ENCODE measurements at regions of chr2 and their contacts with region 1.

Region 1: DNA sequence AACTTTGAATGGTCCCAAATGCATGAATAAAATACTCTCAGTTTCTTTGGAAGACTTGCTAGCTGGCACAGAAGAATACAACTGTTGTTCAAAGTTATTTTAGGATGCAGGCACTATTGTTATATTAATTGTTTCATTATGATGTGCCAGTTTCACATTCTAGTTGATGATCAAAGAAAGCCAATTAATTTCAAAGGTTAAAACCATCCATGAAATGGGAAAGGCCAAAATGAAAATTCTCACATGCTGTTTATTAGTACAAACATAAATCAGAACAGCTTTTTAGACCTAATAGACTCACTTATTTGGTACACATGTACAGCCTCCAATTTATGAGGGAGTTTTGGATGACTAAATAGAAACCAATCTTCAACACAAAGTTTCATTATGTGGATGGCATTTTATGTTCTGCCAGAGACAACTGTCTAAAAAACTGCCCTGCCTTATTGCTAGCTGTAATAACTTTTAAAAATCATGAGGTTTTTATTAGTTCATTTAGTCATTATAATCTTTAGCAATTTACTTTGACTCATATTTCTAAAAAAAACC is 42.2 kb downstream of the RFTN2 start:
- DNase-seq: no peak
- H3K4me3 ChIP-seq: no peak overlapping the region
- H3K27ac ChIP-seq: no peak overlapping the region
- H3K4me1 ChIP-seq: no peaks in the 10 kb centered on the region
- H3K27me3 ChIP-seq: no peaks in the 10 kb centered on the region
- CTCF ChIP-seq: no peak
- EP300 ChIP-seq: no peak
- POLR2A ChIP-seq: no peak

Region 2: DNA sequence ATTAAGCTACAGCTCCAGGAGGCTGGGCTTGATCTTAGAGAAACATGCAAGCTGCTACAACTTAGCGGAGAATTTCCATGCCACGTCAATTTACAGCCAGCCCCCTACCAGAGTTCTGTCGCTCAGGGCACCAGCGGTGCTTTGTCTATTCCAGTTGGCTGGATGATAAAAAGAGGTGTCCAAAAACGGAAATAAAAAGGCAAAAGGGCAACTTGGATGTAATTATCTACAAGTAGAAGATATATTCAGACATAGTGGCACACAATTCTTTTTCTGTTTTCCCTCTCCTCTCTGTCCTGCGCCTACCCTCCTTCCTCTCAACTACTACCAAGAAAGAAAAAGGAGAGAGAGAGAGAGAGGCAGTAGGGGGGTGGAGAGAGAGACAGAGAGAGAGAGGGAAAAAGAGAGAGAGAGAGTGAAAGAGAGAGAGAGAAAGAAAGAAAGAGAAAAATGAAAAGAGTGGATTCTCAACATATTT is 42.6 kb after region 1 on chr2:
- intact Hi-C with region 1: loop called (anchors 5 kb)
- DNase-seq: no peak
- H3K4me3 ChIP-seq: peak overlapping the region; percentile 21 to 40 (median 30)
- H3K27ac ChIP-seq: peak overlapping the region; percentile 49 to 63 (median 57)
- H3K4me1 ChIP-seq: no peaks in the 10 kb centered on the region
- H3K27me3 ChIP-seq: no peaks in the 10 kb centered on the region
- CTCF ChIP-seq: no peak
- EP300 ChIP-seq: no peak
- POLR2A ChIP-seq: no peak

Region 3: DNA sequence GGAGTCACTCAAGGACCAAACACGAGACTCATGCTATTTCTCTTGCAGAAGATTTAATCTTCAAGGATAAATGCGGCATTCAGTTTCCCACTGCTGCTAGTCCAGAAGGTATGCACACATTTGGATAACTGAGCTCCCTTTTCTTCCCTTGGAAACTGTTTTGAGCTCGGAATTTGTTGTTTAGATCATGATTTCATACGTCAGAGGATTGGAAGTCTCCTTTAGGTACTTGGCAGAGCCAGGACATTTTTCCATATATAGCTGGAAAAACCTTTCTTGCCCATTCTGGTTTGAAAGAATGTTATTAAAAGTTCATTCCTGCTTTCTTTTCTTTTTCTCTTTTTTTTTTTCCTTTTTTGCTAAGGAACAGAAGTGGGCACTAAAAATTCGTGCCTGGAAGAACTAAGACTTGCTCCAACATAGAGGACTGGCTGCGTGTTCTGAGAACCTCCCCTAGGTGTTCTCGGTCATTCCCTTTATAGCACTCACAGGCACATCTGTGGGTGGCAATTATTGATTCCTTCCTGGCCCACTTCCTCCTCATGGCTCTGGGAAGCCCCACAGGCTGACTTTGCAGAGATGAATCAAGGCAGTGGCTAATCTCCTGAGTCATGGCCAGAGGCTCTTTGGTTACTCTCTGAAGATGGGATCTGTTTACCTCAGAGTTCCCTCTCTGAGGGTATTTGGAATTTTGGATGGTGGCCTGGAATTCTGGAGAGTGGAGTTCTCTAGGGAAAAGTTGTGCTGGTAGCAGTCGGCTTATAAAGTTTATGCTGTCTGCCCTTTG is 276.0 kb after region 1 on chr2:
- intact Hi-C with region 1: no loop called
- DNase-seq: no peak
- H3K4me3 ChIP-seq: no peak overlapping the region
- H3K27ac ChIP-seq: peak overlapping the region in 1 of 4 donors; percentile 51
- H3K4me1 ChIP-seq: peaks cover 0 to 22% (median 16%) of the 10 kb centered on the region in 4 donors
- H3K27me3 ChIP-seq: no peaks in the 10 kb centered on the region
- CTCF ChIP-seq: no peak
- EP300 ChIP-seq: no peak
- POLR2A ChIP-seq: no peak